ENCODE measurements at regions of chr13 and their contacts with region 1.

Region 1: DNA sequence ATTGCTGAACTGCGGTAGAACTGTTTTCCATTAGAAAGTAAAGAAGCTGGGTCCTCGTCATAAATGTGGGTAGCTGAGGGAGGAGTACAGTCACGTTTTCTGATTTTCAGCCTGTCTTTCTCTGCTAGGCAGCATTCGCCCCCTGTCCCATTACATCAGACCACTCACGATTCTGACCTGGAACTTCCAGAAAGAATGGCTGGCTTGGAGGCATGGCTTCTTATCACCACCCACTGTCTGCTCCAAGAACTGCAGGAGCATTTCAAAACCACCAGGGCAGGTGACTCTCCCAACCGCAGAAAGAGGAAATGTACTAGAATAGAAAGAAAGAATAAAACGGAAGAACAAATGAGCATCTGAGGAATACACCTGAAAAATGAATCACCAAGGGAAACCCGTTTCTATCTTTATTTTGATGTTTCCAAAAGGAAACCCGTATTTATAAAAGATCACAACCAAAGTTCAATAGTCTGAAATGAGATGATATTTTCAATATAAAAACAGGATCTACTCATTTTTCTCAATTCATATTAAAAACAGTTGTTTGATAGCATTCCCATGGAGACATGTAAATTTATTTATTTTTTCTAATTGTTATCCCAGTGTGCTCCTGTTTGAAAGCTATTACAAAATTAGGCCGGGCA is 22.1 kb upstream of the POMP start:
- DNase-seq: peak in 1 of 2 donors; percentile 31
- H3K4me3 ChIP-seq: no peak overlapping the region
- CTCF ChIP-seq: peak in 1 of 3 donors; percentile 45
- POLR2A ChIP-seq: no peak

Region 2: DNA sequence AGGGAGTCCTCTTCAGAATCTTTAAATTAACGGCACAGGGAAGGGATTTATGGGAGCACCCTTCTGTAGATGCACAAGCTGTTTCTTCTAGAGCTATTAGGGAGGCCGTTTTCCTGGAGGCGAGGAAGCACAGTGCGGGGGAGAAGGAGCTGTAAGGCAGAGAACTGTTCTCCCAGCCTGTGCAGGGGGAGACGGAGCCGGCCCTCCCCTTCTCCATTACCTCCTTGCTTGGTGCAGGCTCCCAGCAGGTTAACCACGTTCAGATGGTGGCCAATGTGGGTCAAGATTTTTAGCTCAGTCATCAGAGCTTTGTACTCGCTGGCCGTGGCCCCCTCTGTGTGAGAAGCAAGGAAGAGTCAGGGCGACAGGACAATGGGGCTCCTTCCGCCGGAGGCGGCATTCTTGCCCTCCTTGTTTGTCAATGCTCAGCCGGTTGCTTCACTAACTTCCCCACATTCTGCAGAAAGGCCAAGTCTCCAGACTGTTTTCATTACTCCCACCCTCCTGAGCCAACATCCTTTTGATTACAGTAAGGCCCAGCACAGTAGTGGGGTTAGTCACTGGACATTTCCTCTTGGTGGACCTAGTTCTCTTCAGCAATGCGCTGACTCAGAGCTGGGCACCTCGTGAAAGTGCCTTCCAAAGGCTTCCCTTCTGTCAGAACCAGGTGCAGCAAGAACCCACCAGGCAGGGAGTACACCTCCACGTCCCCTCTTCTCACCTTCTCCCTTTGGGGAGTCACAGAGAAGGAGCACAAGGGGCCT is 307.2 kb before region 1 on chr13:
- intact Hi-C with region 1: loop called (anchors 5 kb)
- DNase-seq: peak in 1 of 2 donors; percentile 21
- H3K4me3 ChIP-seq: no peak overlapping the region
- CTCF ChIP-seq: no peak
- POLR2A ChIP-seq: no peak

Measured in lower leg skin (tissue), 4 donors.